Activated CD8-positive, alpha-beta memory T cell treated with anti-CD3 and anti-CD28 coated beads, Interleukin-2, amount 10 ng/mL, durations not matched to agents 7 days and 5 days (primary cell): ENCODE measurements at regions of chr14 and their contacts with region 1.

Region 1: GRCh38 chr14:68911594-68912227 is 67.4 kb downstream of the ACTN1 start:
- DNase-seq: peak; percentile 82
- ATAC-seq: peak; percentile 86
- H3K4me3 Mint-ChIP-seq: no peak overlapping the region
- H3K27ac Mint-ChIP-seq: no peak overlapping the region
- H3K4me1 Mint-ChIP-seq: peaks cover 11% of the 10 kb centered on the region
- H3K27me3 Mint-ChIP-seq: peaks cover 3% of the 10 kb centered on the region

Region 2: GRCh38 chr14:68898248-68899032 is 13.3 kb before region 1 on chr14:
- CTCF ChIA-PET with region 1: no interaction called
- DNase-seq: no peak
- ATAC-seq: no peak
- H3K4me3 Mint-ChIP-seq: no peak overlapping the region
- H3K27ac Mint-ChIP-seq: peak overlapping the region; percentile 37
- H3K4me1 Mint-ChIP-seq: peaks cover 6% of the 10 kb centered on the region
- H3K27me3 Mint-ChIP-seq: peaks cover 3% of the 10 kb centered on the region

Region 3: GRCh38 chr14:68926236-68926635 is 14.5 kb after region 1 on chr14:
- CTCF ChIA-PET with region 1: interaction called, 16 read pairs
- DNase-seq: no peak
- ATAC-seq: no peak
- H3K4me3 Mint-ChIP-seq: no peak overlapping the region
- H3K27ac Mint-ChIP-seq: no peak overlapping the region
- H3K4me1 Mint-ChIP-seq: peaks cover 14% of the 10 kb centered on the region
- H3K27me3 Mint-ChIP-seq: peaks cover 6% of the 10 kb centered on the region

Region 4: GRCh38 chr14:68955164-68955921 is 43.6 kb after region 1 on chr14:
- CTCF ChIA-PET with region 1: interaction called, 11 read pairs
- DNase-seq: no peak
- ATAC-seq: no peak
- H3K4me3 Mint-ChIP-seq: no peak overlapping the region
- H3K27ac Mint-ChIP-seq: no peak overlapping the region
- H3K4me1 Mint-ChIP-seq: peaks cover 11% of the 10 kb centered on the region
- H3K27me3 Mint-ChIP-seq: no peaks in the 10 kb centered on the region

Region 5: DNA sequence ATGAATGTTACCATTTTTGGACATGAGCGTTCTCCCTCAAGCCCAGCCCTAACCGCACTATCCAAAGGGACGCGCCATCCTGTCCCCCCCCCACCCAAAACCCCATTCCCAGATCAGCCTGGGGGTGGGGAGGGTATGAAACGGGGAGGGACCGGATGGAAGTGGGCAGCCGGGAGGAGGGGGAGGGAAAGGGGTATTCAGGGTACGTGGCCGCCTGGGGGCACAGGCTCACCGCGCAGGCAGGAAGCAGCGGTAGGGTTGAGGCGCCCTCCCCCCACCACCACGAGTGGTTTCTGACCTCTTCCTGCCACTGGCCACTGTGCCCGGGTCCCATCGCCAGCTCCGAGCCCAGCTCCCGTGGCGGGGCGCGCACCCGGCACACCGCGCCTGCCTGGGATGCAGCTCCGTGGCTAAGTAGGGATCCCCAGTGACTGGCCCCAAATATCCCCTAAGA is 66.0 kb after region 1 on chr14:
- CTCF ChIA-PET with region 1: interaction called, 14 read pairs
- DNase-seq: peak; percentile 84
- ATAC-seq: peak; percentile 43
- H3K4me3 Mint-ChIP-seq: peak overlapping the region; percentile 76
- H3K27ac Mint-ChIP-seq: peak overlapping the region; percentile 73
- H3K4me1 Mint-ChIP-seq: peaks cover 22% of the 10 kb centered on the region
- H3K27me3 Mint-ChIP-seq: peaks cover 48% of the 10 kb centered on the region

Region 6: DNA sequence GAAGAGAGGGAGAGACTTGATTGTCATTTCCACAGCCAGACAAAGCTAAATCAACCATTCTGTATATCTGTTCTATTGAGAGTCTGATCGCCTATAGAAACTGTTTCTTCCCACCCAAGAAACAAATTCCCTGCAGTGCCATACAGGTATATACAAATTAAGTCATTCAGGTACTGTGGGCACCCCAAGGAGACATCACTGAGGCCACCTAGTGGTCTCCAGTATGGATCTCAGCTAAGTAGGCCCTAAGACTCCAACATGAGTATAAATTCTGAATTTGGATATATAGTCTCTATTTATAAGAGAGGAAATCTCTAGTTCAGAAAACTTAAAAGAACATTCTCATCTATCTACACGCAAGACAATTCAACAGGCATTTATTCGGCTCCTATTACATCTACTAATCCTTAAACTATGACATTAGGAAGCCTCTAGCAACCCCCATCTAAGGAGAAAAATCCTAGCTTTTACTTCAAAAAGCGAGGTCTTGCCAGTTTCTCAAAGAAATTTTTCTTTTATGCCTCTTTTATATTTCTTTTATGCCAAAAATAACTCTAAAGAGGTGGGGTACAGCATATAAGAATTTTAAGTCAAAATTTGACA is 178.6 kb after region 1 on chr14:
- CTCF ChIA-PET with region 1: interaction called, 41 read pairs
- DNase-seq: no peak
- ATAC-seq: peak; percentile 51
- H3K4me3 Mint-ChIP-seq: no peak overlapping the region
- H3K27ac Mint-ChIP-seq: no peak overlapping the region
- H3K4me1 Mint-ChIP-seq: peaks cover 17% of the 10 kb centered on the region
- H3K27me3 Mint-ChIP-seq: no peaks in the 10 kb centered on the region

Region 7: DNA sequence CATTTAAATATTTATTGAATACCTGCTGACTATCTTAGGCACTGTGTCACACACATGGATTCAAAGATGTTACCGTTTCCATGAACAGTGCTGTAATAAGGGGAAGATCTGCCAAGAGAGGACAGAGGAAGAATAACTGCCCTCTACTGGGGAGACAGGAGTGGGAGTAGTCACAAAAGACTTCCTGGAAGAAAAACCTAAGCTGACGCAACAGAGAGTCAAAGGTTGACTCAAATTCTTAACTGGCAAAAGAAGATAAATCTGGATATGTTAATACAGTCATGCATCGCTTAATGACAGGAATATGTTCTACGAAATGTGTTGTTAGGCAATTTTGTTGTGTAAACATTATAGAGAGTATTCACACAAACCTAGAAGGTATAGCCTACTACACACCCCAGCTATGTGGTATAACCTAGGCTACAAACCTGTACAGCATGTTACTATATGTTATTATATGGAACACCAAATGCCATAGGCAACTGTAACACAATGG is 189.7 kb after region 1 on chr14:
- CTCF ChIA-PET with region 1: interaction called, 43 read pairs
- DNase-seq: no peak
- ATAC-seq: peak; percentile 70
- H3K4me3 Mint-ChIP-seq: no peak overlapping the region
- H3K27ac Mint-ChIP-seq: peak overlapping the region; percentile 67
- H3K4me1 Mint-ChIP-seq: peaks cover 10% of the 10 kb centered on the region
- H3K27me3 Mint-ChIP-seq: no peaks in the 10 kb centered on the region

Region 8: DNA sequence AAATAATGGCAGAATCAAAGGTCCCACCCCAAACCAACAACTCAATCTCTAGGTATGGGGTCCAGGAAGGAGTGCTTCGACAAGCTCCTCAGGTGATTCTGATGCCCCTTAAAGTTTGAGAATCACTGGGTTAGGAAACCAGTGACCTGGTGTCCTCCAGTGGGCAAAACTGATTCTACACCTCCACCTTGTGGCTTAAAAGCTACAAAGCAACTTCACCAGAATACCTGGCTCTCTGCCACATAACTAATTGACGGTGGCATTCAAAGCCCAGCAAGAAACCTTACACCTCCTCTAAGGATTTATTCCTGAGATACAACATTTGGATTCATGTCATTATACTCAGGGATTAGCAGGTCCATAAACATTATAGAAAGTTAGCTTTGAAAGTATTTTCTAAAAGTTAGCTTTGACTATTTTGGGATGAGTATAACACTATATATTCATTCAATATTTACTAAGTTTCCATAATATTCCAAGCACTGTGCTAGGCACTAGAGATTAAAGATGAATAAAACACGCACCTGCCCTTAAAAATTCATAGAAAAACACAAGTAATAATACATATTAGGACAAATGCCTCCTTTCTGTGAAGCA is 195.8 kb after region 1 on chr14:
- CTCF ChIA-PET with region 1: interaction called, 43 read pairs
- DNase-seq: peak; percentile 42
- ATAC-seq: peak; percentile 53
- H3K4me3 Mint-ChIP-seq: no peak overlapping the region
- H3K27ac Mint-ChIP-seq: no peak overlapping the region
- H3K4me1 Mint-ChIP-seq: peaks cover under 1% of the 10 kb centered on the region
- H3K27me3 Mint-ChIP-seq: no peaks in the 10 kb centered on the region